Aorta (tissue), 5 donors: ENCODE measurements at regions of chr19 and their contacts with region 1.

Region 1: DNA sequence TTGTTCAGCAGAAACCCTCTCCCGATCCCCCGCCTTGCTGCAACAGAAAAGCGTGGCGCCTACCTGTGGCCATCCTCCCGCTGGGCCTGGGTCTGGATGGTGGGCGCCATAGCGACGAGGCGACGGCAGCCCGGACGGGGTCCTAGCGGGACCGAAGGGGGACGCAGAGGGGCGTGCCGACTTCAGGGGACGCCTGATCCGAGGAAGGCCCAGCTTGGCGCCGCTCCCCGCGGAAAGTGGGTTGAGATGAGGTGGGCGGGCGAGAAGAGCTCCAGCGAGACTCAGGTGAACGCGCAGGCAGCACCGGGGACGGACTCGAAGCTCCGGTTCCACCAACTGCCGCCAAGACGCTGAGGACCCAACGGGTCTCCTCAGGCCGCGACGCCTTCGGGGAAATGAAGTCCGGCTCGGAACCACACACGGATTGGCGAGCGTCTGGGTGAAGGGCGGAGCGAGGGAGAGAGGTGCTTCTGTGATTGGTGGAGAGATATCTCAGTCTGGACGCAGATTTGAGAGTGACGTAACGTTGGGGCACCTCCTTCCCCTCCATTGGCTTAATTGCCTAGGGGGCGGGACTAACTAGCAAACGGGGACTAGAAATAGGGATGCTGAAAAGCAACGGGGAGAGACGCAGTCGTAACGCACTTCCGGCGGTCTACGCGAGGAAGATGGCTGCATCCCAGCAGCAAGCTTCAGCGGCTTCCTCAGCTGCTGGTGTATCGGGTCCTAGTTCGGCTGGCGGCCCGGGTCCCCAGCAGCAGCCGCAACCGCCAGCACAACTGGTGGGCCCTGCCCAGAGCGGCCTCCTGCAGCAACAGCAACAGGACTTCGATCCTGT is at the starts of genes MED29 and PAF1:
- DNase-seq: peak; percentile 98
- ATAC-seq: peak; percentile 98
- H3K4me3 ChIP-seq: peak within 1 kb of the TSS; percentile 84 to 90
- H3K27ac ChIP-seq: peak within 1 kb of the TSS; percentile 89 to 92
- H3K4me1 ChIP-seq: no peaks in the 10 kb centered on the region
- H3K27me3 ChIP-seq: no peaks in the 10 kb centered on the region
- total RNA-seq, gene MED29: 28.9 to 35.1 TPM
- total RNA-seq, gene PAF1: 33.9 to 34.5 TPM

Region 2: DNA sequence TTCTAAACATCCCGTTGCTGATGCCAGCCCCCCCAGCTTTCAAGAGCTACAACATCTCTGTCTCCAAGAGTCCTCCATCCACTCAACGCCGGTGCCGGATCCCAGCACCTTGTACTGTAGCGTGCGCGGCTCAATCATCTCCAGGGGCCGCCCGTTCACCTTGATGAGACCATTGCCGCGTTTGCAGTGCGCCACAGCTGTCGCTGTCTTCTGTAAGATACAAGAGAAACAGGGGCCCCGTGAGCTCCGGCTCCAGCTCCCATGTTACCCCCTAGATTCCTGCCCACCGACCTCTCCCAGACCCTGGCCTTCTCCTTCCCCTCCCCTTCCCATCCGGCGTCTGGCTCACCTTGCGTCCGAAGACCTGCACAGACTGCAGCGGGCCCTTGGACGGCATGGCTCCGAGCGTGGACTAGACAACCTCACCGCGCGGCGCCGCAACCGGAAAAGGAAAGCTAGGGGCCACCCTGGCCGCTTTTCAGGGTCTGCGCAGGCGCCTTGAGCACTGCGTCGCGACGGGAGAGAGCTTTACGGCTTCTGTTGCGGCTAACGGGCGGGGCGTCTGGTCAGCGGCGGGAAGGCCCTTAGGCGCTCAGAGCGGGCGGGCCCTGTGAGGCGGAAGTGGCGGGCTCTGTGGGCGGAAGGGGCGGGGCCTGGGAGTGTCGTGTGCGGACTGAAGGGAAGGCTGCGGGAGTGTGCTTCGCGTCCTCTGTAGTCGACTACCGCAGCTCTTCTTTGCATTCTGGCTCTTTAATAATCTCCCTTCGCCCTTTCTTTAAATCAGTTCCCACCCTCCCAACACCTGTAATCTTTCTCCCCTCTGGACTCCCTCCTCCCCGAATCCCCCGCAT is 44.8 kb after region 1 on chr19 and contains the start of gene RPS16:
- intact Hi-C with region 1: loop called in 1 of 2 experiments (anchors 5 kb)
- DNase-seq: peak; percentile 99 to 100
- ATAC-seq: peak; percentile 99
- H3K4me3 ChIP-seq: peak within 1 kb of the TSS; percentile 31 to 61
- H3K27ac ChIP-seq: peak within 1 kb of the TSS in 1 of 2 donors; percentile 49
- H3K4me1 ChIP-seq: peaks cover 0 to 2% of the 10 kb centered on the region in 2 donors
- H3K27me3 ChIP-seq: no peaks in the 10 kb centered on the region
- total RNA-seq, gene RPS16: 1,268 to 1,273 TPM